ENCODE measurements at regions of chr20 and their contacts with region 1.

Region 1: DNA sequence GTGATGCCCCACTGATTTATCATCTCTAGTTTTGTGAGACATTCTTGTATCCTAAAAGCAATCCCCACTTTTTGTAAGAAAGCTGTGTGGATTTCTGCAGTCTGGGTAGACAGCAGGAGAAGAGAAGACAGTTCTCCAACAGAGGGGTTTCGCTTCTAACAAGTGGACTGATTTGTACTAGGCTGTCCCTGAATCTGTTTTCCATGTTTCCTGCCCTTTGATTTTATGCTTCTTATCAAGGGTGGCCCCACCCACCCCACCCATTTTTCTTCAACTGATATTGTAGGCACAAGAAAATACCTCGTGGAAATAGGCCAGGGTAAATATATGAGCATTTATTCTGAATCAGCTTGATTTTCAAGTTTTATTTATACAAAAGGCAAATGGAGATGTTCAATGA is 25.7 kb upstream of the JAG1 start:
- DNase-seq: no peak
- ATAC-seq: no peak
- H3K4me3 ChIP-seq: no peak overlapping the region
- H3K27ac ChIP-seq: no peak overlapping the region
- H3K4me1 ChIP-seq: no peaks in the 10 kb centered on the region
- H3K27me3 ChIP-seq: no peaks in the 10 kb centered on the region; the same call in 1 of the 2 replicates
- CTCF ChIP-seq: no peak
- POLR2A ChIP-seq: no peak
- RAD21 ChIP-seq: no peak

Region 2: DNA sequence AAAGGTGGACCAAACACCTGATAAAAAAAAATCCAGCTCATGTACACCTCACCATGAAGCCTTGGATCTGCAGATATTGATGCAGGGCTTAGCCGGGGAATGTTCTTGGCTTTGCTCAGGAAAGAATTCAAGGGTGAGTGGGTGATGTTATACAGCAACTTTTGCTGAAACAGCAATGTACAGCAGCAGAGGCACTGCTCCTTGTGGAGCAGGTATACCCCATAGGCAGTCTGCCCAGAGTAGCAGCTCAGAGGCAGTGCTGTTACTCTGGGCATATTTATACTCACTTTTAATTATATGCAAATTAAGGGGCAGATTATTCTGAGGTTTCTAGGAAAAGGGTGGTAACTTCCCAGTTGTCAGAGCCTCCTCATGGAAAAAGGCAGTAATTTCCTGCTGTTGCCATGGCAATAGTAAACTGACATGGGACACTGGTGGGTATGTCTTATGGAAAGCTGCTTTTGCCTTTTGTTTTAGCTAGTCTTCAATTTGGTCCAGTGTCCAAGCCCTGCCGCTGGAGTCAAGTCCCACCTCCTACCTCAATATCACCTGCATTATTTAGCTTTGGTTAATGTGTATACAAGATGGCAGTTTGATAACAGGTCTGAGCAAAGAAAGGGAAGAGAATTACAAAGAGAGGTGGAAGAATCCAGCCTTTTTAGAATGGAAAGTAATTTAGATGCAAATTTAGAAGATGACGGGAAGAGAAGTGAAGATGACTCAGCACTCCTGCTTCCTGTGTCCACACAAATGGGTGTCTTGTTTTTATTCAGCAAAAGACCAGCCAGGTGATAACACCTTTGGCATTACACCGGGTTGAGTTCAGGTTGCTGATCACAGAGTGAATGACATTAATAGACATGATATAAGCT is 84.5 kb after region 1 on chr20:
- CTCF ChIA-PET with region 1: no interaction called
- POLR2A ChIA-PET with region 1: no interaction called
- dilution Hi-C with region 1: no loop called
- in situ Hi-C with region 1: no loop called
- intact Hi-C with region 1: no loop called
- DNase-seq: no peak
- ATAC-seq: no peak
- H3K4me3 ChIP-seq: no peak overlapping the region
- H3K27ac ChIP-seq: no peak overlapping the region
- H3K4me1 ChIP-seq: no peaks in the 10 kb centered on the region; the same call in 1 of the 2 replicates
- H3K27me3 ChIP-seq: peaks cover 2% of the 10 kb centered on the region; the same call in 1 of the 2 replicates
- CTCF ChIP-seq: no peak
- POLR2A ChIP-seq: no peak
- RAD21 ChIP-seq: no peak

Region 3: GRCh38 chr20:11195899-11196558 is 496.5 kb after region 1 on chr20:
- CTCF ChIA-PET with region 1: no interaction called
- POLR2A ChIA-PET with region 1: interaction called, 11 read pairs
- dilution Hi-C with region 1: no loop called
- in situ Hi-C with region 1: no loop called
- intact Hi-C with region 1: no loop called
- DNase-seq: peak; percentile 95
- ATAC-seq: peak; percentile 90
- H3K4me3 ChIP-seq: no peak overlapping the region
- H3K27ac ChIP-seq: no peak overlapping the region; the same call in 1 of the 2 replicates
- H3K4me1 ChIP-seq: peaks cover 7% of the 10 kb centered on the region; the same call in 1 of the 2 replicates
- H3K27me3 ChIP-seq: no peaks in the 10 kb centered on the region
- CTCF ChIP-seq: no peak
- POLR2A ChIP-seq: no peak
- RAD21 ChIP-seq: no peak; the same call in 1 of the 2 replicates

Measured in IMR-90 (cell line).